SK-N-SH (cell line): ENCODE measurements at regions of chr2 and their contacts with region 1.

Region 1: GRCh38 chr2:74391580-74392448 is 11.7 kb upstream of the DCTN1 start:
- DNase-seq: peak; percentile 94
- H3K4me3 ChIP-seq: peak overlapping the region; percentile 84 to 94
- H3K27ac ChIP-seq: peak overlapping the region; percentile 64 to 80
- H3K4me1 ChIP-seq: peaks cover 9 to 20% of the 10 kb centered on the region in 2 experiments; a peak in 3 of 4 replicates
- H3K27me3 ChIP-seq: no peaks in the 10 kb centered on the region
- CTCF ChIP-seq: peak; percentile 98
- EP300 ChIP-seq: no peak
- RAD21 ChIP-seq: peak; percentile 66

Region 2: DNA sequence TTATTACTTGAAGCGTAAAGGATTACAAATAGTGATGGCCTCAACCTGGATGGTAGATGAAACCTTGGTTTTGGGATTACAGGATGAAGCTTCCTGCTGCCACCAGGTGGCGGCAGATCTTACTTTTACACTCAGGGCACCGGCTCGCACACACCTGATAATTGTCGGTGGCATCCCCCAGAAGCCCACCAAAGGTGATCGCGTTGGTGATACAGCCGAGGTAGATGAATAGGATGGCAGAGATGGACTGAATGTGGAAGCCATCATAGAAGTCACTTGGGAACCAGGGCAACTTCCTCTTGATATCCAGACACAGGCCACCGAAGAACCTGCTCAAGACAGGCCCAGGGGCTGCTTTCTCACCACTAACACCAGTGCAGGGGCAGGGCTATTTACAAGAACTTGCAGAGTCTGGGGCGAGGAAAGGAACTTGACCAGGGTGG is 141.6 kb before region 1 on chr2:
- CTCF ChIA-PET with region 1: interaction called, 20 read pairs
- POLR2A ChIA-PET with region 1: no interaction called
- DNase-seq: peak; percentile 85
- H3K4me3 ChIP-seq: no peak overlapping the region
- H3K27ac ChIP-seq: no peak overlapping the region
- H3K4me1 ChIP-seq: no peaks in the 10 kb centered on the region
- H3K27me3 ChIP-seq: no peaks in the 10 kb centered on the region
- CTCF ChIP-seq: peak; percentile 88
- EP300 ChIP-seq: no peak
- RAD21 ChIP-seq: peak; percentile 81

Region 3: GRCh38 chr2:74374509-74375205 is 17.2 kb before region 1 on chr2:
- CTCF ChIA-PET with region 1: interaction called, 14 read pairs
- POLR2A ChIA-PET with region 1: interaction called, 11 read pairs
- DNase-seq: peak; percentile 99
- H3K4me3 ChIP-seq: peak overlapping the region; percentile 28 to 50; a peak in 2 of 4 replicates
- H3K27ac ChIP-seq: peak overlapping the region in 1 of 2 experiments; percentile 55; a peak in 1 of 4 replicates
- H3K4me1 ChIP-seq: peaks cover 8 to 27% of the 10 kb centered on the region in 2 experiments; a peak in 2 of 4 replicates
- H3K27me3 ChIP-seq: no peaks in the 10 kb centered on the region
- CTCF ChIP-seq: no peak
- EP300 ChIP-seq: no peak
- RAD21 ChIP-seq: no peak

Region 4: DNA sequence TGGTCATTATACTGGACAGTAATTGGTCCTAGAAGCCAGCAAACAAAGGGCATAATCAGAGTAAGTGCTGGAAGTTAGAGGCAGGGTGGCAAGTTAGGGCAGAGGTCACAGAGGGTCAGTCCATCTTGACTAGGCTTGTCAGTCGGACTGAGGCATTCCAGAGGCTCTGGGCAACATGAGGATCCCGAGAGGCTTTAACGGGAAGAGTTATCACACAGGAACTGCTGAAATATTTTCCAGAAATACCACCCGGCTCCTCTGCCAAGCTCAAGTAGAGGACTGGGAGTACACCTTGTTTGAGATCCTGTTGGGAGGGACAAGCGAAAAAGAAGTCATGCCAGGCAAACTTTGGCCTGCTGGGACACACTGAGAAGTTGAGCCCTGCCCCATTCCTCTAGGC is 15.9 kb after region 1 on chr2:
- CTCF ChIA-PET with region 1: interaction called, 18 read pairs
- POLR2A ChIA-PET with region 1: interaction called, 3 read pairs
- DNase-seq: no peak
- H3K4me3 ChIP-seq: no peak overlapping the region
- H3K27ac ChIP-seq: no peak overlapping the region
- H3K4me1 ChIP-seq: peaks cover 2 to 9% of the 10 kb centered on the region in 2 experiments; a peak in 2 of 4 replicates
- H3K27me3 ChIP-seq: no peaks in the 10 kb centered on the region
- CTCF ChIP-seq: no peak
- EP300 ChIP-seq: no peak
- RAD21 ChIP-seq: no peak

Region 5: GRCh38 chr2:74421221-74421870 is 29.5 kb after region 1 on chr2 and contains the starts of genes C2orf81 and WDR54:
- CTCF ChIA-PET with region 1: interaction called, 22 read pairs
- POLR2A ChIA-PET with region 1: interaction called, 10 read pairs
- DNase-seq: peak; percentile 98
- H3K4me3 ChIP-seq: peak within 1 kb of the TSS; percentile 87
- H3K27ac ChIP-seq: peak within 1 kb of the TSS; percentile 82 to 94
- H3K4me1 ChIP-seq: peaks cover 0 to 16% of the 10 kb centered on the region in 2 experiments; a peak in 1 of 4 replicates
- H3K27me3 ChIP-seq: no peaks in the 10 kb centered on the region
- CTCF ChIP-seq: no peak
- EP300 ChIP-seq: no peak; a peak in 1 of 4 replicates
- RAD21 ChIP-seq: no peak
- polyA plus RNA-seq, gene C2orf81: 1.2 and 2.5 TPM in 2 replicates
- polyA plus RNA-seq, gene WDR54: 50.7 and 61.6 TPM in 2 replicates

Region 6: DNA sequence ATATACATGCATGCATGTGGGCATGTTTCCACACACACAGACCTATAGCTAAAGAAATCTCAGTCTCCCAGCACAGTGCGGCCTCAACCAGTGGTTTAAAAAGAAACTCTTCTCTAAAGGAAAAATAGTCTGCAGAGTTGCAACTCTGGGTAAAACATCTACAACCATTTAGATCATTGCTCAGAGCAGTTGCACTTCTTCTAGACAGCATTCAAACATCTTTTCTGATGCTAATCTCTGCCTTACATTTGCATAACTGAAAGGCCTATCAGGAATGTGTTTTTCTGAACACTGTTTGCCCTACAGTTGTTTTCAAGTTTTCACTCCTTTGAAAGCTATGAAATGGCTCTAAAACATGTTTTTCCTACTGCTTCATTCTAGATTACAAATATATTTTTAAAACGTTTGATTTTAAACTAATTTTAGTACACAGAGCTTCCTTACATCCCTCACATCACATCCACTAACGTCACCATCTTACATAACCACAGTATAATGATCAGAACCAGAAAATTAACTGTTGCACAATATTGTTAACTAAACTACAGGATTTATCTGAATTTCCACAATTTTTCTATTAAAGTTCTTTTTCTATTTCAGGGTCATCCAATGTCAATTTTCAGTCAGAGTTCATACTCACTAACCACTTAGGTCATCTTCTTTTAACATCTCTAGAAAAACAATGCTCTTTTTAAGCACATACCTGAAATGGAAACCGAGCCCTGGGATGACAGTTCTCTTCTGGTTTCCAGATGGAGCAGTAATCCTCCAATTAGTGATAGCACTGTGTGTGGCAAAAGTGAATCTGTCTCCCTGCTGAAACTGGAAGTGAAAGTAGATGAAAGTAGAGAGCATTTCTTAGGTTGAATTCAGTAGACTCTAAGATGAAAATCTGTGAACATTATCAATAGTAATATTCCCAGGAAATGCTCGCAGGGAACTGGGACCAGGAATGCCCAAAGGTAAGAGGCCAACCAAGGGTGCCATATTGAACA is 1820.5 kb after region 1 on chr2:
- CTCF ChIA-PET with region 1: no interaction called
- POLR2A ChIA-PET with region 1: no interaction called
- DNase-seq: no peak
- H3K4me3 ChIP-seq: no peak overlapping the region
- H3K27ac ChIP-seq: no peak overlapping the region
- H3K4me1 ChIP-seq: no peaks in the 10 kb centered on the region
- H3K27me3 ChIP-seq: no peaks in the 10 kb centered on the region
- CTCF ChIP-seq: no peak
- EP300 ChIP-seq: no peak
- RAD21 ChIP-seq: no peak